Heart left ventricle (tissue), 16 donors: ENCODE measurements at regions of chr17 and their contacts with region 1.

Region 1: DNA sequence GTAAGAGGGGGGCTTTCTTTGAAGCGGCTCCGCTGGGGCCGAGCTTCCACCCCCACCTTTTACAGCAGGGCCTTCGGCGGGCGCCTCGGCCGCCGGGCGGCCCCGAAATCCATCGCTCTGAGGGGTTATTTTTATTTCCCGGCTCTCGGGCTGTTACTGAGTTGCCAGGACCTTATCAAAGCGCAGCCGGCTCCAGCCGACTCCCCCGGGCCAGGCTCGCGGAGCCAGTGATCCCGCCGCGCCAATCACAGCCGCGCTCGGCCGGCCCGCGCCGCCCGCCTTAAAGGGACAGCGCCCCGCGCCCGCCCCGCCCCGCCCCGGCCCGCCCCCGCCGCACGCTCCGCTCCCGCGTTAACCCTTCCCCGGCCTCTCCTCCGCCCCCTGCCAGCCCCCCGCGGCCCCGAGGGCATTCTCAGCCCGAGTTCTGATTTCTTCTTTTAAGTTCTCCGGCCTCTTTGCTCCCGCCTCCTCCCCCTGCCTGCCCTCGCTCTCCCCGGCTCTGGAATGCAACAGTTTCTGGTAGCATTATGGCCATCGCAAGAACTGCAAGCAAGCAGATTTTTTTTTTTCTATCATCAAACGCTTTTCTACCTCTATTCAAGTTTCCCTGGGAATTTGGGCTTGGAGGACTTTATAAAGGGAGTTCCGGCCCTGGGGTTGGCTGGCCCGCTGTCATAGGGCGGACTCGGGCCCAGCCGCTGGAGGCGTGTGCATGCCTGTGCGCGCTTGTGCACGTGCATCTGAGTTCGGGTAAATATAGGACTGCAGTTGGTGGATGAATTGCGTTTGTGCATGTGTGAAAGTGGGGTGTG is at the start of gene AXIN2:
- DNase-seq: peak; percentile 91 to 95 (median 93)
- ATAC-seq: peak; percentile 81 to 90 (median 86)
- H3K4me3 ChIP-seq: peak within 1 kb of the TSS; percentile 65 to 100 (median 88)
- H3K27ac ChIP-seq: peak within 1 kb of the TSS in 10 of 12 donors; percentile 86 to 98 (median 90)
- H3K4me1 ChIP-seq: peaks cover 0 to 36% (median 13%) of the 10 kb centered on the region in 12 donors
- H3K27me3 ChIP-seq: peaks cover 0 to 20% (median 0%) of the 10 kb centered on the region in 9 donors
- CTCF ChIP-seq: peak in 5 of 12 donors; percentile 2 to 30 (median 8)
- POLR2A ChIP-seq: no peak
- total RNA-seq, gene AXIN2: 5.7 to 24.0 (median 12.9) TPM

Region 2: DNA sequence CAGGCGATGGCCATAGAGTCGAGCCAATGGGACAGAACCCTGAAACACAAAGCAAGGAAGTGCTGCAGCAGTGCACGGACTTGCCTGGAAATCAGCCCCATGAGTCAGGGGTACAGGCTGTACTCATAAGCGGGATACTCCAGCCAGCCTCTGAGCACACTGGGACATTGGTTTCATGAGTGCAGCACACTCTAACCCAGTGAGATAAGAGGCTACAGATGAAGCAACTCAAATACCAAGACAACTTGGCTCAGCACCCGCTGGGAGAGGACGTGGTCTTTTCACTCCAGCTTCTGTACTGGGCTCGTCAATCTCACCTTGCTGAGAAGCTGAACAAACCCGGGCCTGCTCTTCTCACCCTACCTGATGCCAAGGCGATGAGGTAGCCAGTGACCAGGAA is 98.4 kb before region 1 on chr17:
- intact Hi-C with region 1: loop called in 6 of 10 experiments (anchors 1 to 5 kb)
- DNase-seq: peak; percentile 40 to 93 (median 75)
- ATAC-seq: peak; percentile 98 to 99 (median 98)
- H3K4me3 ChIP-seq: no peak overlapping the region
- H3K27ac ChIP-seq: peak overlapping the region; percentile 32 to 84 (median 68)
- H3K4me1 ChIP-seq: peaks cover 0 to 9% (median 0%) of the 10 kb centered on the region in 12 donors
- H3K27me3 ChIP-seq: peaks cover 0 to 2% (median 0%) of the 10 kb centered on the region in 9 donors
- CTCF ChIP-seq: no peak
- POLR2A ChIP-seq: no peak

Region 3: DNA sequence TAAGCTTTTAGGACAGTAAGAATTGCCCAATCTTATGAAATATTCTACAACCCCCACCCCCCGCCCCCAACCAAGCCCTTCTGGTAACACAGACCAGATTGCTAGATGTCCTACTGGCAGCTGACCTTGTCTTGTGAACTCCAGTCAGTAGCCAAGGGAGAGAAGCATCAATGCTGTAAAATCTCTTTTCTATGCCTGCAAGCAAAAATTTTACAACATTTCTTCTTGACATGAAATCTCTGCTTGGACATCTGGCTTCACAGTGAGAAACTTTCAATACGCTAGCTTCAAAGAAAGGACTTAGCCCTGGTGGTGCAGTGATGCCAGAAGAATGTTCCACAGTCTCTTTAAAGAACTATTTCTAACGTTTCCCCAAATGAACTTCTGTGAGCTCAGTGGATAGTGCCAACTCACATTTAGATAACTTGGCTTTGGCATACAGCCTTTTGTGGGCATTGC is 169.1 kb after region 1 on chr17:
- intact Hi-C with region 1: loop called in 2 of 10 experiments (anchors 10 kb)
- DNase-seq: no peak
- ATAC-seq: peak in 3 of 4 donors; percentile 45 to 62 (median 49)
- H3K4me3 ChIP-seq: no peak overlapping the region
- H3K27ac ChIP-seq: peak overlapping the region in 1 of 12 donors; percentile 12
- H3K4me1 ChIP-seq: peaks cover 0 to 13% (median 4%) of the 10 kb centered on the region in 12 donors
- H3K27me3 ChIP-seq: no peaks in the 10 kb centered on the region
- CTCF ChIP-seq: no peak
- POLR2A ChIP-seq: no peak

Region 4: GRCh38 chr17:65785109-65785508 is 223.5 kb after region 1 on chr17:
- intact Hi-C with region 1: loop called in 1 of 10 experiments (anchors 5 kb)
- DNase-seq: no peak
- ATAC-seq: peak; percentile 66 to 86 (median 79)
- H3K4me3 ChIP-seq: no peak overlapping the region
- H3K27ac ChIP-seq: peak overlapping the region in 11 of 12 donors; percentile 19 to 72 (median 59)
- H3K4me1 ChIP-seq: peaks cover 0 to 26% (median 12%) of the 10 kb centered on the region in 12 donors
- H3K27me3 ChIP-seq: no peaks in the 10 kb centered on the region
- CTCF ChIP-seq: no peak
- POLR2A ChIP-seq: no peak

Region 5: GRCh38 chr17:65914784-65915350 is 353.3 kb after region 1 on chr17:
- intact Hi-C with region 1: loop called in 1 of 10 experiments (anchors 10 kb)
- DNase-seq: no peak
- ATAC-seq: peak in 1 of 4 donors; percentile 27
- H3K4me3 ChIP-seq: no peak overlapping the region
- H3K27ac ChIP-seq: no peak overlapping the region
- H3K4me1 ChIP-seq: peaks cover 0 to 24% (median 15%) of the 10 kb centered on the region in 12 donors
- H3K27me3 ChIP-seq: no peaks in the 10 kb centered on the region
- CTCF ChIP-seq: no peak
- POLR2A ChIP-seq: no peak

Region 6: DNA sequence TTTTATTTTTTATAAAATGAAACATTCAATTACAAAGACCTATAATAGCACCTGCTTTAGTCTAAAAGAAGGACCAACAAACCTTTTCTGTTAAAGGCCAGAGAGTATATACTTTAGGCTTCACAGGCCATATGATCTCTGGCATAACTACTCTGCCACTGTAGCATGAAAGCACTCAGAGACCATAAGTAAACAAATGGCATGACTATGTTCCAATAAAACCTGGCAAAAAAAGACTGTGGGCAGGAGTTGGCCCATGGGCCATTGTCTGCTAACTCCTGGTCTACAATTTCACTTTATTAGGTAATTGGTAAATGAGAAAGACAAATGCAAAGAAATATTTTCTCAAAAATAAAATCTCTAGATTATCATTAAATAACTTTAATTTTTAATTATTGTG is 615.4 kb after region 1 on chr17:
- intact Hi-C with region 1: loop called in 2 of 10 experiments (anchors 10 kb)
- DNase-seq: no peak
- ATAC-seq: no peak
- H3K4me3 ChIP-seq: no peak overlapping the region
- H3K27ac ChIP-seq: no peak overlapping the region
- H3K4me1 ChIP-seq: peaks cover 0 to 5% (median 0%) of the 10 kb centered on the region in 12 donors
- H3K27me3 ChIP-seq: no peaks in the 10 kb centered on the region
- CTCF ChIP-seq: no peak
- POLR2A ChIP-seq: no peak